Activated CD8-positive, alpha-beta T cell treated with anti-CD3 and anti-CD28 coated beads for 36 hours (primary cell): ENCODE measurements at regions of chr3 and their contacts with region 1.

Region 1: DNA sequence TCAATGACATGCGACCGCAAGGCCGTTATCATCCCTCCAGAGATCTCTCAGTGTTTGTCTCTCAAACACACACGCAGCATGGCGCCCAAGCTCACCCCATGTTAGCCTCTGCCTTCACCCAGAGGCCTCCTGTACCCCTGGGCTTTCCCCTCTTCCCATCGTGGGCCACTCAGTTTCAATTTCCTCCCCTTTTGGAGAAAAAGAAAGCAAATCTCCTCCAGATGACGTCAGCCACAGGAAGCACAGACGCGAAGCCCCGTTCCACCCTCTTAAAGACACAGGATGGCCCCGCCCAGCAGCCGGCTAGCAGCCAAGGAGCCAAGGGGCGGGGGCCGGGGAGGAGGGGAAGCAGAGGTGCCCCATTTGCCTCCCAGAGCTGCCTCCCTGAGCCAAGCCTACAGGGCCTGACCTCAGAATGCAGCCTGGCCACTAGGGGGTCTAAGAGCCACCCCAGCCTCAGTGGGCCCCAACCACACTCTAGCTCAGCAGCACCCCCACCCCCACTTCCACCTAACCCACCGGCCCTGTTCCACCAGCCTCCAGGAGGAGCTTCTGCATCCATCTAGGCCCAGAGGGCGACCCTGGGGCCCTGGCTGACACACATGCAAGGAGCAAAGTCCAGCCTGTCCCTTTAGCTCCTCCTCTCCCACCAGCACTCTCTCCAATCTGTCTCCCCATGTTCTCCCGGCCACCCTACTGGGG is 26.5 kb downstream of the ATRIP start:
- DNase-seq: peak; percentile 99
- ATAC-seq: peak; percentile 92
- H3K4me3 Mint-ChIP-seq: peak overlapping the region; percentile 80
- H3K27ac Mint-ChIP-seq: peak overlapping the region; percentile 96
- H3K4me1 Mint-ChIP-seq: peaks cover 50% of the 10 kb centered on the region
- H3K27me3 Mint-ChIP-seq: no peaks in the 10 kb centered on the region
- CTCF ChIP-seq: peak; percentile 55

Region 2: GRCh38 chr3:48507351-48508061 is 34.4 kb after region 1 on chr3:
- CTCF ChIA-PET with region 1: interaction called, 8 read pairs
- POLR2A ChIA-PET with region 1: interaction called, 11 read pairs
- intact Hi-C with region 1: loop called (anchors 5 kb)
- DNase-seq: peak; percentile 88
- ATAC-seq: peak; percentile 87
- H3K4me3 Mint-ChIP-seq: no peak overlapping the region
- H3K27ac Mint-ChIP-seq: peak overlapping the region; percentile 49
- H3K4me1 Mint-ChIP-seq: peaks cover 36% of the 10 kb centered on the region
- H3K27me3 Mint-ChIP-seq: no peaks in the 10 kb centered on the region
- CTCF ChIP-seq: peak; percentile 57

Region 3: DNA sequence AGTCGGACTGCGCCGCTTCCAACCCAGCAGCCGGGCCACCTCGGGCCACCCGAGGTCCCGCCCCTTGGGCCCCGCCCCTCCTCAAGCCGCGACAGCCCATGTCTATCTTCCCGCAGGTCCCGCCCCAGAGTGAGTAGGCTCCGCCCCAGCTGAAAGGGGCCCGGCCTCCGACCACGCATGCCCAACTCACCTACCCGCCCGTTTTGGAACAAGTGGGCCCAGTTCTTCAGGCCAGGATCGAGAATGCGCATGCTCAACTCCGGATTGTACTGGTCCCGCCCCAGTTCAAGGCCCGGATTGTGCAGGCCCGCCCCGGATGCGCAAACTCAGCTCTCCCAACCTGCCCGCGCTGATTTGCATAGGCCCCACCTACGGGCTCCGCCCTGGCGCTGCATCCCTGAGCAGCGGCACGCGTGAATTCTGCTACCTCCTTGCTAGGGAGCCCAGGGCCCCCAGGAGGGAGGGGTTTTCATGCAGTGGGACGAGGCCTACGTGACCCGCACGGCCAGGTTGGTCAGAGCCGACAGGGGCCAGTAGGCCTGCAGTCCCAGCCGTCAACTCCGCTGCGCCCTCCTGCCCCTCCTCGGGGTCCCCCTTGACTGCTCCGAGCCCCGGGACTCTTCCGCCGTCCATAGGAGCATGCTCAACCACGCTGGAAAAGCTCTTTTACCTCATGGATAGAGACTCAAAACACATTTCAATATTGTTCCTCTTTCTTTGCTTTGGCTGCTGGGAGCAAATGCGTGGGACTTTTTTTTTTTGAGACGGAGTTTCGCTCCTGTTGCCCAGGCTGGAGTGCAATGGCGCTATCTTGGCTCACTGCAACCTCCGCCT is 83.9 kb after region 1 on chr3 and contains the start of gene PFKFB4:
- CTCF ChIA-PET with region 1: interaction called, 19 read pairs
- POLR2A ChIA-PET with region 1: interaction called, 12 read pairs
- intact Hi-C with region 1: no loop called
- DNase-seq: peak; percentile 100
- ATAC-seq: peak; percentile 89
- H3K4me3 Mint-ChIP-seq: peak within 1 kb of the TSS; percentile 89
- H3K27ac Mint-ChIP-seq: peak within 1 kb of the TSS; percentile 93
- H3K4me1 Mint-ChIP-seq: peaks cover 34% of the 10 kb centered on the region
- H3K27me3 Mint-ChIP-seq: no peaks in the 10 kb centered on the region
- CTCF ChIP-seq: no peak
- total RNA-seq, gene PFKFB4: 90.8 to 94.0 TPM